Activated B cell treated with CpG ODN at 0.5 μM for 24 hours (primary cell): ENCODE measurements at regions of chr17 and their contacts with region 1.

Region 1: GRCh38 chr17:75069783-75070182 is 18.0 kb upstream of the SLC16A5 start:
- DNase-seq: no peak
- ATAC-seq: no peak
- H3K4me3 Mint-ChIP-seq: no peak overlapping the region
- H3K27ac Mint-ChIP-seq: no peak overlapping the region
- H3K4me1 Mint-ChIP-seq: no peaks in the 10 kb centered on the region
- H3K27me3 Mint-ChIP-seq: no peaks in the 10 kb centered on the region
- CTCF ChIP-seq: no peak

Region 2: DNA sequence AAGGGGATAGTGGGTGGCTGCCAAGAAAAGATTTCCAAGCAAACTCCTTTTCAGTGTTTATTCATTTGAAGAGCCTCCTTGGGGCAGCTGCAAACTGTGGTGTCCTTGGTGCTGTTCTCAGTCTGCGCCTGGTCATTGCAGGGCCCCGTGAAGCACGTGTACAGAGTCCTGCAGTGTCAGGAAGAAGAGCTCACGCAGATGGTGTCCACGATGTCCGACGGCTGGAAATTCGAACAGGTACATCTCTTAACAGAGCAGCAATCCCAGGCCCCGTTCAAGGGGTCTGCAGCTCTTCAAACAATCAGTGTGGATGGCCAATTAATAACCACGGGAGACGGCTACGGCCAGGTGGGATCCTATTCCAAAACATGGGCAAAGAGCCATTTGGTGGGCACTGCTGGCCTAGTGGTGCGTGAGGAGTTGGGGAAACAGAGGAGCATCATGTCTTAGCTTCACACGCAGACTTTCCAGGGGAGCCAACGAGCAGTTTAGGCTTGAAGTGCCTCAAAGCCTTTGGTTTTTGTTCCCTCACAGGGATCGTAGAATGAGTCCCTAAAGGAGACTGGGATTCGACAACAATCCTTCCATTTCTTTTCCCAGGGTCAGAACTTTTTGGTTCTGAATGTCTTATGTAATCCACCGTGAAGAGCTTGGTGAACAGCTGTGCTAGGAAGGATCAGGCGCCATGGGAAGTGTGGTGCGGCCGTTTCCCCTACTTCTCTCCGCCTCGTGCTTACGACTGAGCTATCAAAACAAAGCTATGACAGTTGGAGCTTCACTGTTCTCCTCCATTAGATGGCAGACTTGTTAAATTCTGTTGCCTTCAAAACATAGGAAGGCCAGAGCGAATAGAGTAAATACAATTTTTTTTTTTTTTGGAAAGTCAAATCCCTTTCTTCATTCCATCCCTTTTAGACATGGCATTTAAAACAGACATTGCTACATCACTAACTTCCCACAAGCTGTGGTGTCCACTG is 10.1 kb before region 1 on chr17:
- CTCF ChIA-PET with region 1: interaction called, 3 read pairs
- POLR2A ChIA-PET with region 1: interaction called, 10 read pairs
- intact Hi-C with region 1: no loop called
- DNase-seq: no peak
- ATAC-seq: no peak
- H3K4me3 Mint-ChIP-seq: no peak overlapping the region
- H3K27ac Mint-ChIP-seq: no peak overlapping the region
- H3K4me1 Mint-ChIP-seq: no peaks in the 10 kb centered on the region
- H3K27me3 Mint-ChIP-seq: no peaks in the 10 kb centered on the region
- CTCF ChIP-seq: no peak

Region 3: DNA sequence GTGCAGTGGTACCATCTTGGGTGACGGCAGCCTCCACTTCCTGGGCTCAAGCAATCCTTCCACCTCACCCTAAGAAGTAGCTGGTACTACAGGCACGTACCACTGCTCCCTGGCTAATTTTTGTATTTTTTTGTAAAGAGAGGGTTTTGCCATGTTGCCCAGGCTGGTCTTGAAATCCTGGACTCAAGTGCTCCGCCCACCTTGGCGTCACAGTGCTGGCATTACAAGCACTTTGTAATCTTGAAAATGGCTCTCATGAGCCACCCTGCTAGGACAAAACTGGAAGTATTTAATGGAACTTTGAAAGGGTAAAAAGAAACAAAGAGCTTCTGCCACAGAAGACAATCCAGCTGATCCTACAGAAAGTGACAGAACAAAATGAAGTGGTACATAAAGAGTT is 103.7 kb after region 1 on chr17:
- CTCF ChIA-PET with region 1: no interaction called
- POLR2A ChIA-PET with region 1: no interaction called
- intact Hi-C with region 1: no loop called
- DNase-seq: no peak
- ATAC-seq: no peak
- H3K4me3 Mint-ChIP-seq: no peak overlapping the region
- H3K27ac Mint-ChIP-seq: peak overlapping the region; percentile 46
- H3K4me1 Mint-ChIP-seq: peaks cover 16% of the 10 kb centered on the region
- H3K27me3 Mint-ChIP-seq: no peaks in the 10 kb centered on the region
- CTCF ChIP-seq: no peak